ENCODE measurements at regions of chr13 and their contacts with region 1.

Region 1: GRCh38 chr13:48769107-48769704 is 115.5 kb downstream of the CYSLTR2 start:
- DNase-seq: peak; percentile 71 to 72
- H3K4me3 ChIP-seq: no peak overlapping the region
- H3K27ac ChIP-seq: no peak overlapping the region
- H3K4me1 ChIP-seq: no peaks in the 10 kb centered on the region
- H3K27me3 ChIP-seq: no peaks in the 10 kb centered on the region
- CTCF ChIP-seq: peak; percentile 99

Region 2: DNA sequence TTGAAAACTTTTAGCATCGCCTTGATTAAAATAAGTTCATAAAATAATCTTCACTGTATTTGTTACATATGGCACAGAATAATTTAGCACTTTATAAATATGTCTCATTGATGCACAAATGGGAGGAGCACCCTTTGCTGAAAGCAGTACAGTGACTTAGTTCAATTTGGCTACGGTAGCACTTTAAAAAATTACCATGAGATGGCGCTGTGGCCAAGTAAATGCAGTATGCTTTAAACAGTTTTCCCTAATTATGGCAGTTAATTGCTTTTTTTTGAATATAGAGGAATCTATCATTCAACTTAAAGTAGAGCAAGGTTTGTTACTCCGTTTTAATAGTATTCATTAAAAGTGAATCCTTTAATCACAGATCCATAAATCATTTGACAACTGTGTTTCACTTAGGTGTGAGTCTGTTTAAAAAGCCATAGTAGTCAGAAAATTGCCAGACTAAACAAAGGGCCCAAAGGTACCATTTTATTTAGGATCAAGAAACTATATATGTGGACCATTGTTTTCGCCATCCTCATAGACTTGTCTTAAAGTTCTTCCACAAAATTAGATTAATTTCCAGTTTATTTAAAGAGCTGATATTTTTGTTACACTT is 1937.5 kb before region 1 on chr13:
- CTCF ChIA-PET with region 1: no interaction called
- POLR2A ChIA-PET with region 1: no interaction called
- intact Hi-C with region 1: loop called (anchors 1 kb)
- DNase-seq: peak in 1 of 2 experiments; percentile 26
- H3K4me3 ChIP-seq: no peak overlapping the region
- H3K27ac ChIP-seq: no peak overlapping the region
- H3K4me1 ChIP-seq: no peaks in the 10 kb centered on the region
- H3K27me3 ChIP-seq: no peaks in the 10 kb centered on the region
- CTCF ChIP-seq: peak; percentile 93

Region 3: DNA sequence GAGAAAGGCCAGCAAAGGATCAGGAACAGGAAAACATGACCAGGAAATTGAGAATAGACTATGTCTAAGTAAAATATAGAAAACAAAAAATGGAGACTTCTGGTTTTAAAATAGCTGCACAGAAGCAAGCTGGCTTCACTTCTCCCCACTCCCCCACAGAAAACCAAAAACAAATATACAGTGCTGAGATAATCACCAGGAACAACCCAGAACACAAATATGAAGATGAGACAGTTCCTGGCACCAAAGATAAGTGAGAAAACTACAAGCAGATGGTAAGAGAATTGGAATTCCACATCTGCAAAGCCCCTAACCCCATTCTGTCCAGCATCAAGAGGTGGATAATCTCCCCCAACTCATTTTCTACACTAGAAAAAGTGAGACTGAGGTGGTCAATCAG is 1165.8 kb before region 1 on chr13:
- CTCF ChIA-PET with region 1: no interaction called
- POLR2A ChIA-PET with region 1: no interaction called
- intact Hi-C with region 1: loop called (anchors 10 kb)
- DNase-seq: no peak
- H3K4me3 ChIP-seq: no peak overlapping the region
- H3K27ac ChIP-seq: no peak overlapping the region
- H3K4me1 ChIP-seq: no peaks in the 10 kb centered on the region
- H3K27me3 ChIP-seq: no peaks in the 10 kb centered on the region
- CTCF ChIP-seq: no peak

Region 4: GRCh38 chr13:48126944-48127830 is 642.0 kb before region 1 on chr13:
- CTCF ChIA-PET with region 1: interaction called, 3 read pairs
- POLR2A ChIA-PET with region 1: no interaction called
- intact Hi-C with region 1: loop called (anchors 10 kb)
- DNase-seq: peak; percentile 21 to 52
- H3K4me3 ChIP-seq: no peak overlapping the region
- H3K27ac ChIP-seq: no peak overlapping the region
- H3K4me1 ChIP-seq: no peaks in the 10 kb centered on the region
- H3K27me3 ChIP-seq: no peaks in the 10 kb centered on the region
- CTCF ChIP-seq: peak; percentile 77

Region 5: GRCh38 chr13:48580185-48580803 is 188.9 kb before region 1 on chr13:
- CTCF ChIA-PET with region 1: no interaction called
- POLR2A ChIA-PET with region 1: no interaction called
- intact Hi-C with region 1: loop called (anchors 5 kb)
- DNase-seq: peak in 1 of 2 experiments; percentile 55
- H3K4me3 ChIP-seq: no peak overlapping the region
- H3K27ac ChIP-seq: no peak overlapping the region
- H3K4me1 ChIP-seq: no peaks in the 10 kb centered on the region
- H3K27me3 ChIP-seq: peaks cover 8% of the 10 kb centered on the region; the same call in 1 of the 2 replicates
- CTCF ChIP-seq: peak; percentile 84

Region 6: GRCh38 chr13:49606747-49607648 is 837.8 kb after region 1 on chr13:
- CTCF ChIA-PET with region 1: no interaction called
- POLR2A ChIA-PET with region 1: no interaction called
- intact Hi-C with region 1: loop called (anchors 1 kb)
- DNase-seq: peak; percentile 69 to 75
- H3K4me3 ChIP-seq: no peak overlapping the region
- H3K27ac ChIP-seq: no peak overlapping the region
- H3K4me1 ChIP-seq: no peaks in the 10 kb centered on the region
- H3K27me3 ChIP-seq: no peaks in the 10 kb centered on the region
- CTCF ChIP-seq: peak; percentile 82